Left cardiac atrium (tissue), 4 donors: ENCODE measurements at regions of chr2 and their contacts with region 1.

Region 1: DNA sequence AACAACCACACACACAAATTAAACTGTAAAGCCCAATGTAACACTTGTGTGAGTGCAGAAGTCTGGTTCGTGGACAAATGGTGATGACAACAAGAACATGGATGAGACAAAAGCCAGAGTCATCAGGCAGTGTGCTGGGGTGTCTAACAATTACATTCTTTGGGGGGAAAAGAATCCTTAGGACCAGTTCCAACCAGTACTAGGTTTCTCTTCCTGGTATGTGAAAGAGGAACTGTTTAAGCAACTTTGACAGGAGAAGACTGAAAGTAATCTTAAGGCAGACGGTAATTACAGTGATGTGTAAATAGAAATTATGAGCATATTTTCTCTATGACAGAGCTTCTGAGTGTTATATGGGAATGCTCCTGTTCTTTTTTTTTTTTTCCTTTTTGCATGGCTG is 133.4 kb downstream of the AFF3 start:
- DNase-seq: no peak
- ATAC-seq: peak in 1 of 2 donors; percentile 29

Region 2: GRCh38 chr2:99867770-99868169 is 141.2 kb before region 1 on chr2:
- intact Hi-C with region 1: no loop called
- DNase-seq: peak; percentile 29
- ATAC-seq: peak in 1 of 2 donors; percentile 59

Region 3: DNA sequence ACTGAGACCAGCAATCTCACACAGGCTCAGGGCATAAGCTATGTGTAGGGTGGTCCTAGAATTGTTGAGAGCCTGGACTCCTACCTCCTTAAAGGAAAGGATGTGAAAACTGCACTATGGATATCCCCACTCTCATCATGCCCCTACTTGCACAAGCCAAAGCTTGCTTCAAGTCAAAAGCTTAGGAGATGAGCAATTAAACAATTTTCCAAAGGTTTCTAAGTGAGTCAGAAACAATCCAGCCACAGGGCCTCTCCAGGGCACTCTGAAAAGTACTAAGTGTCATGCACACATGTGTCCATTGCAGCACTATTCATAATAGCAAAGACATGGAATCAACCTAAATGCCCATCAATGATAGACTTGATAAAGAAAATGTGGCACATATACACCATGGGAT is 82.0 kb before region 1 on chr2:
- intact Hi-C with region 1: no loop called
- DNase-seq: no peak
- ATAC-seq: no peak

Region 4: DNA sequence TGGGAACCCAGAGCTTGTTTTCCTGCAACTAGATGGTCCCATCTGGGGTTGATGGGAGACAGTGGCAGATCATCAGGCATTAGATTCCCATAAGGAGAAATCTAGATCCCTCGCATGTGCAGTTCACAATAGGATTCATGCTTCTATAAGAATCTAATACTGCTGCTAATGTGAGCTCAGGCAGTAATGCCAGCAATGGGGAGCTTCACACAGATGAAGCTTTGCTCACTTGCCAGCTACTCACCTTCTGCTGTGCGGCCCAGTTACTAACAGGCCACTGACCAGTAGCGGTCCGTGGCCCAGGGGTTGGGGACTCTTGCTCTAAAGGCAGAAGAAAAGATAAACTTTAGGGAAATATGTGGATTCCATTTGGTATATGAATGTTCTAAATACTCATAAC is 59.4 kb before region 1 on chr2:
- intact Hi-C with region 1: no loop called
- DNase-seq: no peak
- ATAC-seq: no peak

Region 5: DNA sequence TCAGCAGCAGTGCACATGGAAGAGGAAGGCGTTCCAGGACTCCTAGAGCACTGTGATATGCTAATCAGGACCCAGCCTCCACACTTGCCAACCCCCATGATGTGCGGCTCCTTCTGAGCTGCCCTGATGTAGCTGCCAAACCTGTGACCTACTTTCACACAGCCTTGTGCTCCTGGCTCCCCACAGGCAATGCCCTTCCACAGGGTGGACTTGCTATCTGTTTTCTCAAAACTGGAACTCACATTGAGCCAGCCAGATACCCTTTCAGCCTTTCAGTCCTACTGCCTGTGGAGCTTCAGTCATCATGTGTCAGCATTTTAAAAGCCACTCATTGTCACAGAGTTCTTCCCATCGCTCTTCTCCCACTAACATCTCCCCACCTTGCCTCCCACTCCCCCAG is 48.2 kb before region 1 on chr2:
- intact Hi-C with region 1: loop called in 1 of 2 experiments (anchors 5 kb)
- DNase-seq: peak; percentile 56
- ATAC-seq: peak; percentile 97 to 98

Region 6: DNA sequence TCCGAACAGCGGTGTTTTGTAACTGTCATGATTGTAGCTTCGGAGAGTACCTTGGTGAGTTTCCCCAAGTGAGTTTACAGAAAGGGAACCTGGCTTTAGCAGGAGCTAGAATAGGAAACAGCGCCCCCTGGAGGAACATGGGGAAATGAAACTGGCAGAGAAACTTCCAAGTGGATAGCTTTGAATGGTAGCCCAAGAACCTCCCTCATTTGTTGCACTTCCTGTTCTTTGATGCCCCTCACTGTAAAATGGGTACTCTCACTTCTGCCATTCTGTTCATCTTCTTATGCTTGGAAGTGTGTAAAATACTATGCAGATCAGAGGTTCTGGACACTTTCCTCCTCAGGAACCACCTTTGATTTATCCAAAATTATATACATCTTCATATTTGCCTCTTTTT is 372.3 kb after region 1 on chr2:
- intact Hi-C with region 1: no loop called
- DNase-seq: peak; percentile 70
- ATAC-seq: peak; percentile 78 to 88